Activated CD4-positive, alpha-beta T cell treated with anti-CD3 and anti-CD28 coated beads for 36 hours (primary cell): ENCODE measurements at regions of chr1 and their contacts with region 1.

Region 1: GRCh38 chr1:116674011-116674531 is 6.5 kb upstream of the IGSF3 start:
- DNase-seq: no peak
- ATAC-seq: no peak
- H3K4me3 Mint-ChIP-seq: no peak overlapping the region
- H3K27ac Mint-ChIP-seq: no peak overlapping the region
- H3K4me1 Mint-ChIP-seq: no peaks in the 10 kb centered on the region
- H3K27me3 Mint-ChIP-seq: peaks cover 26% of the 10 kb centered on the region

Region 2: GRCh38 chr1:116038679-116039078 is 635.4 kb before region 1 on chr1:
- CTCF ChIA-PET with region 1: no interaction called
- POLR2A ChIA-PET with region 1: no interaction called
- intact Hi-C with region 1: no loop called
- DNase-seq: no peak
- ATAC-seq: no peak
- H3K4me3 Mint-ChIP-seq: no peak overlapping the region
- H3K27ac Mint-ChIP-seq: no peak overlapping the region
- H3K4me1 Mint-ChIP-seq: no peaks in the 10 kb centered on the region
- H3K27me3 Mint-ChIP-seq: no peaks in the 10 kb centered on the region

Region 3: DNA sequence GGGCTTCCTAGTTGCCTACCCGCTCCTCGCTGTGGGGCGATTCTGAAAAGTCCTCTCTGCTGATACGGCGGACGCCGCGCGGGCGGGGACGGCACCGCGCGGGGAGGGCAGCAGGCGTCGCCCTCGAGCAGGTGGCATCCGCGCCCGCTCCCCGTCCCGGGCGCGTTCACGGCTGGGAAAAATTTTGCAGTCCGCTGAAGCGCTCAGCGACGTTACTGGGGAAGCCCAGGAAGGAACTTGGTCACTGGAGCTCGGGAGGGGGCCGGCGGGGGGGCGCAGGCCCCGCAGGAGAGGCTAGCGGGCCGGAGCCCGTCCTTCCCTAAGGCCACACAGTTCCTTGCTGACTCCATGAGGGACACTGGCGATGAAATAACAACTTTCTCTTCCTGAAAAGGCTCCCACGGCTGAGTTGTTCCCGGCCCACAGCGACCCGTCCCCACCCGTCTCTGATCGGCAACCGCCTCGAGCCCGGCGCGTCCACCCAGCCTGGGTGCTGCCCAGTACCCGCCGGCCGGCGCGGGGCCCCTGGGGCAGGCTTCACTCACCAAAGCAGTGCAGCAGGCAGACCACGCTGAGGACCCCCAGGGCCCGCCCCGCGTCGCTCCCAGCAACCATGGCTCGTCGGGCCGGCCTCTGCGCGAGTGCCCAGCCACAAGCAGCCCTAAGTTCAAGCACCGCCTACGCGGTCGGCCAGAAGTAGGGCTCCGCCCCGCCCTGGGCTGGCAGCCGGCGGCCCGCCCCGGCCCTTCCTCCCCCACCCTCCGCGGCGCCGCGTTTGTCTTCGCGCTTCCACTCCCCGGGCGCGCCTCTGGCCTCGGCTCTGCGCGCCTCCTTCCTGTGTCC is 103.5 kb before region 1 on chr1 and contains the start of gene CD58:
- CTCF ChIA-PET with region 1: interaction called, 31 read pairs
- POLR2A ChIA-PET with region 1: no interaction called
- intact Hi-C with region 1: loop called (anchors 1 kb)
- DNase-seq: peak; percentile 93
- ATAC-seq: peak; percentile 77
- H3K4me3 Mint-ChIP-seq: peak within 1 kb of the TSS; percentile 91
- H3K27ac Mint-ChIP-seq: peak within 1 kb of the TSS; percentile 87
- H3K4me1 Mint-ChIP-seq: peaks cover 64% of the 10 kb centered on the region
- H3K27me3 Mint-ChIP-seq: peaks cover 8% of the 10 kb centered on the region
- total RNA-seq, gene CD58: 12.4 to 16.0 TPM